WTC11 (cell line): ENCODE measurements at regions of chr16 and their contacts with region 1.

Region 1: DNA sequence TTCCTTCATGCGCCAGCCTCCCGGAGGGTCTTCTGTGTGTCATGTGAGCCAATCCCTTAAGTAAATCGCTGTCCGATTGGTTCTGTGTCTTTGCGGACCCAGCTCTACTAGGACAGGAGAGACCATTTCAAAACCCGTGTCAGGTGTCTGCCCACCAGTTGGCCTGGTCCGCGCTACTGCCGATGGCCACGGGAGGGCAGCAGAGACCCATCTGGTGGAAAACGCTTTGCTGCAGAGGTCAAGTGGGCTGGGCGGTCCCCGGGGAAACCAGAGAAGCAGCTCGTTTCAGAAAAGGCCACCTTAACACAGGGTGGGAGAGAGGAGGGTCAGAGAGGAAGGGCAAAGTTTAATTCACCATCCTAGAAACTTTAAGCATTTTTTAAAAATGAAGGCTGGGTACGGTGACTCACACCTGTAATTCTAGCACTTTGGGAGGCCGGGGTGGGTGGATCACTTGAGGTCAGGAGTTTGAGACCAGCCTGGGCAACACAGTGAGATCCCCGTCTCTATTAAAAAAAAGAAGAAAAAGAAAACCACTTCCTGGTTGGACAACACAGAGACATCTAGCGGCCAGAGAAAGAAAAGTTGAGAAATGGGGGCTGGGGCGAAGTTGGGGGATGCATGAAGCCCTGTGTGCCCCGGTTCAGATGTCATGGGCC is 2.8 kb upstream of the CIBAR2 start:
- DNase-seq: peak; percentile 99
- ATAC-seq: peak; percentile 93
- H3K4me3 Mint-ChIP-seq: peak overlapping the region; percentile 24; the same call in 1 of the 2 replicates
- H3K27ac Mint-ChIP-seq: peak overlapping the region; percentile 69
- H3K4me1 Mint-ChIP-seq: peaks cover 10% of the 10 kb centered on the region
- H3K27me3 Mint-ChIP-seq: no peaks in the 10 kb centered on the region
- CTCF ChIP-seq: peak; percentile 87

Region 2: GRCh38 chr16:85055503-85056210 is 59.4 kb before region 1 on chr16:
- CTCF ChIA-PET with region 1: interaction called, 10 read pairs
- POLR2A ChIA-PET with region 1: no interaction called
- DNase-seq: no peak
- ATAC-seq: no peak
- H3K4me3 Mint-ChIP-seq: no peak overlapping the region
- H3K27ac Mint-ChIP-seq: peak overlapping the region; percentile 1; the same call in 1 of the 2 replicates
- H3K4me1 Mint-ChIP-seq: peaks cover 17% of the 10 kb centered on the region
- H3K27me3 Mint-ChIP-seq: peaks cover 4% of the 10 kb centered on the region; the same call in 1 of the 2 replicates
- CTCF ChIP-seq: no peak

Region 3: GRCh38 chr16:85068746-85069145 is 46.3 kb before region 1 on chr16:
- CTCF ChIA-PET with region 1: no interaction called
- POLR2A ChIA-PET with region 1: no interaction called
- DNase-seq: no peak
- ATAC-seq: no peak
- H3K4me3 Mint-ChIP-seq: no peak overlapping the region
- H3K27ac Mint-ChIP-seq: no peak overlapping the region
- H3K4me1 Mint-ChIP-seq: 0 out of 2 replicates have a peak, but pooled peaks cover 4% of the 10 kb centered on the region
- H3K27me3 Mint-ChIP-seq: no peaks in the 10 kb centered on the region
- CTCF ChIP-seq: no peak

Region 4: DNA sequence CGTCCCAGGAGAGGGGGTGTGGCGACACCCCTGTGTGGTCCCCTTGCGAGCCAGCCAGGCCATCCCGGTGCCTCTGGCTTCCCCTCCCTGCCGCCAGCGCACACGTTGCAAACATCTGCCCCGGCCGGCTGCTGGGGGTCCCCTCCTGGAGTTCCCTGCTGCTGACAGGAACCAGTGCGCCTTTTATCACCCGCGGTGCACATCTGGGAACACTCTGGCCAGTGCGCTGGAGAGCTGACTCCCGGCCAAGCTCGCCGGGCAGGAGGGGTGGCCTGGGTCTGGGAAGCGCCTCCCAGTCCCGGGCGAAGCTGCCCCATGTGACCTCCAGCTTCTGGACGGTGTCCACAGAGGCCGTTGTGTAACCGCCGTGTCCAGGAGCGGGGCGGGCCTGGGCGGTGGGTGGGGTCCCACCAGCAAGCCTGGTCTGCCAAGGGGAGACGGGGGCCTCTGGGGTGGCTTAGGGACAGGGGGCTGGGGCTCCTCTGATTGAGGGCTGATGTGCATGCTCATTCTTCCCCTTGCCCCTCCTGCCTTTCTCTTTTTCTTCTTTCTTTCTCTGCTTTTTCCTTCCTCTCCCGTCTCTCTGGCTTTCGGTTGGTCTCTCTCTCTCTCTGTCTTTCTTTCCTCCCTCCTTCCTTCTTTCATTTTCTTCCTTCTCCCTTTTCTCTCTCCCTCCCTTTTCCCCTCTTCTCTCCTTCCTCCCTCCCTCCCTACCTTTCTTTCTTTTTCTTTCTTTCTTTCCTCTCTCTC is 22.5 kb after region 1 on chr16:
- CTCF ChIA-PET with region 1: interaction called, 14 read pairs
- POLR2A ChIA-PET with region 1: no interaction called
- DNase-seq: no peak
- ATAC-seq: 0 out of 2 replicates have a peak, but pooled peaks have one; percentile 7
- H3K4me3 Mint-ChIP-seq: no peak overlapping the region
- H3K27ac Mint-ChIP-seq: no peak overlapping the region
- H3K4me1 Mint-ChIP-seq: peaks cover 14% of the 10 kb centered on the region
- H3K27me3 Mint-ChIP-seq: no peaks in the 10 kb centered on the region; the same call in 1 of the 2 replicates
- CTCF ChIP-seq: no peak

Region 5: DNA sequence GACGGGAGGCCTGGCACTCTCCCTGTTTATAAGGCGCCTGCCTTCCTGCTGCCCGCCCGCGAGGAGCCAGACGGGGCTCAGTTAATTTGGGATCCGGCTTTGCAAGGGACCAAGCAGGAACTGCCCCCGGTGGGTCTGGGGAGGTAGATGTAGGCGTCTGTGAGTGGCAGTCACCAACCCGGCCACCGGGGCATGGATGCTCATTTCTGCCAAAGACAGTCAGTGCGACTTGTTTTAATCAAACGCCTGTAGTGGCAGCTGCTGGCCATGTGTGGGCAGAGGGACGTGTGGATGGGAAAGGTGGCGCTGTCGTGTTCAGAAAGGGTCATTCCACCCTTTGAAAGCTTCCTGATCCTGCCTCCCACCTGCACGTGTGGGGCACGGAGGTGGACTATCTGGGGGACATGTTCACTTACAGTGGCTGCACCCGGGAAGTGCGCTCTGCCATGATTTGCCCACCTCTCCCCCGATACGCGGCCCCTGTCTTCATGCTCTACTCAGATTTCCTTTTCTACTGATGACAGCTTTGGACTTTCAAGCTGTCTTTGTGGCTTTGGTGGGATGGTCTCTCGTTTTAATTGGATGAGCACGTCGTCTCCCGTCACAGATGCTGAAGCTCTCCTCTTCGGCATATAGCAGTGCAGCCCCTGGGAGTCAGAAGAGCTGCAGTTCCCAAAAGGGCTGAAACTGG is 57.6 kb after region 1 on chr16:
- CTCF ChIA-PET with region 1: interaction called, 47 read pairs
- POLR2A ChIA-PET with region 1: interaction called, 3 read pairs
- DNase-seq: peak; percentile 60
- ATAC-seq: peak; percentile 21
- H3K4me3 Mint-ChIP-seq: peak overlapping the region; percentile 38
- H3K27ac Mint-ChIP-seq: no peak overlapping the region
- H3K4me1 Mint-ChIP-seq: peaks cover 60% of the 10 kb centered on the region
- H3K27me3 Mint-ChIP-seq: peaks cover 22% of the 10 kb centered on the region
- CTCF ChIP-seq: no peak

Region 6: DNA sequence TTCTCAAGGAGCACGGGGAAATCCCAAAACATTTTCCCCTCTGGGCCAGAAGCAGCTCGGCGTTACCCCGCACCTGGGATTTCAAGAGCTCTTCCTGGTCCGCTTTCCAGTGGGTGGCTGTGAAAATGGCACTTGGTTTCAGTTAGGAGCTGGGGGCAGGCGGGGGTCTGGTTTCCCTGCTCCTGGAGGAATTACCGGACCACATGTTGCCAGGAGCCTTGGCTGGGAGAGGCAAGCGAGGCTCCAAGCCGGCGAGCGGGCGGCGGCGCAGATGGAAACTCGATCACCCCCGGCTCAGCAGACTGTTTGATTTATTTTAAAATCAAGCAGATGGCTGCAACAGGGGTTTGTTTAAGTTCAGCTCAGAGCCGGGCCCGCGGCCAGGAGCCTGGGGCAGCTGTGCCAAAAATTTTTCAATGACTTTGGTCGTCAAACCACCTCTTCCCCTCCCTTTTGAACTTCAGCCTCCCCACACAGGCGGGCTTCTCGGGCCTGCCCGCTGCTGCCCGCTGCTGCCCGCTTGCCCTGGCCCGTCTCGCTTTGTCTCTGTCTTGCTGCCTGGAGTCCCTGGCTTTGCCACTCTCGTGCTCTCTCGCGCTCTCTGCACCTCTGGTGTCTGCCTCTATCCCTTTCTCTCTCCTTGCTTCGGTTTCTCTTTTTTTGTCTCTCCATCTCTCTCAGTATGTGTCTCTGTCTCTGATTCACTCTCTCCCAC is 105.2 kb after region 1 on chr16:
- CTCF ChIA-PET with region 1: interaction called, 13 read pairs
- POLR2A ChIA-PET with region 1: no interaction called
- DNase-seq: no peak
- ATAC-seq: no peak; the same call in 1 of the 2 replicates
- H3K4me3 Mint-ChIP-seq: no peak overlapping the region; the same call in 1 of the 2 replicates
- H3K27ac Mint-ChIP-seq: peak overlapping the region; percentile 42
- H3K4me1 Mint-ChIP-seq: peaks cover 27% of the 10 kb centered on the region
- H3K27me3 Mint-ChIP-seq: no peaks in the 10 kb centered on the region
- CTCF ChIP-seq: no peak

Region 7: DNA sequence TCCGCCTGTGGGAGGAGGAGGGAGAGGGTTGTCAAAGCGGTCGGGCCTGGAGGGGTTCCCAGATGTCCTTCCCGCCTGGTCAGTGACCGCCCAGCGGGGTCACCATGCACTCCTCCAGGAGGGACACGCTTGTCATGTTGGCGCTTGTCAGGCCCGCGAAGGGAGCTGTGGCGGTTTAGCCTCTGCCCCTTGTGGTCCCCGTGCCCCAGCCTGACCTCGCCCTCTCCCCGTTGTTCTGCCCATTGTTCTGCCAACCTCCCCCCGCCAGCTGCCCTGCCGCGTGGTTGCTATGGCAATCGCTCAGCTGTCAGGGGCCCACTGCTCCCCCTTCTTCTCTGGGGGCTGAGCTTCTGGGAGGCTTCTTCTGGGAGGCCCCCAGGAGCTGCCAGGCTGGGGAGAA is 143.6 kb after region 1 on chr16:
- CTCF ChIA-PET with region 1: interaction called, 41 read pairs
- POLR2A ChIA-PET with region 1: no interaction called
- DNase-seq: no peak
- ATAC-seq: no peak
- H3K4me3 Mint-ChIP-seq: no peak overlapping the region
- H3K27ac Mint-ChIP-seq: no peak overlapping the region
- H3K4me1 Mint-ChIP-seq: no peaks in the 10 kb centered on the region
- H3K27me3 Mint-ChIP-seq: no peaks in the 10 kb centered on the region
- CTCF ChIP-seq: no peak

Region 8: DNA sequence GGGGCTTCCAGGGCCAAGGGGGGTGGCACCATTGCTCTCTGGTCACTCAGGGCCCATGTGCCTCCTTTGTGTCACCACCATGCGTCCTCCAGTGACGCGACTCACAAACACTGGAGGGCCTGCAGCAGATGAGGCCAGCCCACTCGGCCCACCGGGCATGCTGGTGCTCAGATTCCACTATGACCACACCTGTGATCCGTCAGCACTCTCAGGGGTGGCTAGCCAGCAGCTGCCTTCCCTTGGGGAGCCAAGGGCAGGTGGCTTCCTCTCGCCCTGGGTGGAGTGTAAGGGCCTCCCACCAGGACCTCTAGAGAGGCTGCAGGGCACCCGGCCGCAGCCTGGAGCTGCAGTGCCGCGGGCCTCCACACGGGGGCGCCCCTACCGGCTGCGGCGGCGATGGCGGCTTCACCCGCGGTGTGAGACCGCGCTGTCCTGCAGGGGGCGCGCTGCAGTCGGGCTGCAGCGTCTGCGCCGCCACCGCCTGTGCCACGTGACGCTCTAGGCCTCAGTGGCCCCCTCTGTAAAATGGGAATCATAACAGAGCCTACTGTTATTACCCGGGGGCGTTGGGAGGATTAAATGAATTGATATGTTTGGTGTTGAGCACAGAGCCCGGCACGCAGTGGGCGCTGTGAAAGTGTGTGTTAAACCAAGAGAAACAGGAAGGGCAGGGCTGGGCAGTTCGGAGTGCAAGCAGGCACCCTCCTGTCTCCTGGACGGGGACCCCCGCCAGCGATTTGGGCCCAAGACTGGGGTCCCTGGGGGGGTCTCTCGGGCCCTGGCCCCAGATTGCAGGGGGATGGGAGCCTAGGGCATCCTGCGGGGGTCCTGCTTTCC is 305.7 kb after region 1 on chr16:
- CTCF ChIA-PET with region 1: interaction called, 17 read pairs
- POLR2A ChIA-PET with region 1: no interaction called
- DNase-seq: peak; percentile 73
- ATAC-seq: peak; percentile 27
- H3K4me3 Mint-ChIP-seq: no peak overlapping the region
- H3K27ac Mint-ChIP-seq: no peak overlapping the region
- H3K4me1 Mint-ChIP-seq: peaks cover 26% of the 10 kb centered on the region
- H3K27me3 Mint-ChIP-seq: no peaks in the 10 kb centered on the region
- CTCF ChIP-seq: peak; percentile 100